Right ventricle myocardium inferior (tissue), 1 donor: ENCODE measurements at regions of chr5 and their contacts with region 1.

Region 1: DNA sequence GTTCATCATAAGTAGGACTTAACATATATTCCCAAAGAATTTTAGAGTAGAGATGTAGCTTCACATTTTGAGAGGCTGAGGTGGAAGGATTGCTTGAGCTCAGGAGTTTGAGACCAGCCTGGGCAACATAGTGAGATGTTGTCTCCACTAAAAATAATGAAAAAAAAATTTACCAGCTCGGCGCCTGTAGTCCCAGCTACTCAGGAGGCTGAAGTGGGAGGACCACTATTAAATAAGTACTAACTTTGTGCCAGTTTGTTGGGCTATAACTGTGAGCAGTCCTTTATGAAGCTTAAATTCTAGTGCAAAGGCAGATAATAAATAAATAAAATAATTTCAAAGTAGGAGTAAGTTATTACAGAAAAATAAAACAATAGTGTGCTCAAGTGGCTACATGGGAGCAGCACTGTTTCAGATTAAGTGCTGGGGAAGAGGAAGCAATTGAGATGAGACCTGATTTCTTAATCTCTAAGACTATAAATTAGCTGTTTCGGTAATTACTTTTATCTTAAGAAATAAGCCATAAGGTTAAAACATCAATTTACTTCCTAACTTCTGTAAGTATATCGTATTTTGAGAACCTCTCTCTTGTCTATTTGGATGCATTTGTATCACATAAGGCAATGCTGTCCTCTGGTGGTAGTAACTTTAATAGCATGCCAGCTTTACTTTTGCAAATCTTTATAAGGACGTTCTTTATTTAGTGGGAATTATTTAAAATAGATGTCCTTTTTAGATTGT is 98.9 kb downstream of the CSNK1G3 start:
- DNase-seq: no peak
- ATAC-seq: peak; percentile 59

Region 2: DNA sequence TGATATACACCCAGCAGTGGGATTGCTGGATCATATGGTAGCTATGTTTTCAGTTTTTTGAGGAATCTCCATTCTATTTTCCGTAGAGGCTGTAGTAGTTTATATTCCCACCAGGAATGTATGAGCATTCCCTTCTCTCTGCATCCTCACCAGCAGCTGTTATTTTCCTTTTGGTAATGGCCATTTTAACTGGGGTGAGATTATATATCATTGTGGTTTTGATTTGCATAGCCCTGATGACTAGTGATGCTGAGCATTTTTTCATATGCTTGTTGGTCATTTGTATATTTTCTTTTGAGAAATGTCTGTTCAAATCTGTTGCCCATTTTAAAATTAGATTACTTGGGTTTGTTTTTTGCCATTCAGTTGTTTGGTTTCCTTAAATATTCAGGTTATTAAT is 563.1 kb before region 1 on chr5:
- intact Hi-C with region 1: no loop called
- DNase-seq: no peak
- ATAC-seq: no peak

Region 3: GRCh38 chr5:123235781-123236180 is 375.1 kb before region 1 on chr5:
- intact Hi-C with region 1: no loop called
- DNase-seq: no peak
- ATAC-seq: no peak

Region 4: DNA sequence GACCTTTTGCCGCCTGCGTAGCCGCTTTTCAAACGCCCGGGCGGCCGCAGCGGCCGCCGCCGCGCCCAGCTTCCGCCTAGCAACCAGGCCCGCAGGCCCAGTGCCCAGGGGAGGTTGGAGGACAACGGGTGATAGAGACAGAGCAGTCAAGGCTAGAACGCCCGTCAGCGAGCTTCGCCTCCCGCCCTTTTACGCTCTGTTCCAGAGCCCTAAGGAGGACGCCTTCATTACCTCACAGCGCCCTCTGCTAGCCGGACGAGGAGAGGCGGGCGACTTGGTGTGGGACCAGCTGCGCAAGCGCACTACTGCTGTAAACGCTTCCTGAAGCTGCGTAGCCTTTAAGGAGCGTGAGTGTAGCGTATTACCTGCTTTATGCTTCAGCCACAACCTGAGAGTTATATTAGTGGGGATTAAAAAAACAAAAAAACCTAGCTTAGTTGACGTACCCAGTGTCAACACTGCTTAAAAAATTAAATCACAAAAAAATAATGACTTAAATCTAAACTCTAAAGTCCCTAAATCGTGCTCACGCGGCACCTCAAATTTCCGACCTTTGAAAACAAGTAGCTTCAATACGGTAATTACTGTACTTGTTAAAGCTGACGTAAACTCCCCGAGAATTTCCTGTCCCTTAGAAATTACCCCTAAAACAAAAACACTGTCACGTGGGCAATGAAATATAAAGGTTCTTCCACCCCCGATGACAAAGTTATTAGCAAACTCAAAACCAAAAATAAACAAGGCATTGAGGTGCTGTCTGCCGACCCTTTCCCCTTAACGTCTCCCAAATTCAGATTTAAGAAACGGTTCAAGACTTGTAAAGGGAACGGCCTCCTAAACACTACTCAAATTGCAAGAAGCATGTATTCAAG is 187.3 kb before region 1 on chr5 and contains the start of gene CEP120:
- intact Hi-C with region 1: loop called (anchors 2 kb)
- DNase-seq: peak; percentile 100
- ATAC-seq: peak; percentile 100
- total RNA-seq, gene CEP120: 12.0 TPM

Region 5: DNA sequence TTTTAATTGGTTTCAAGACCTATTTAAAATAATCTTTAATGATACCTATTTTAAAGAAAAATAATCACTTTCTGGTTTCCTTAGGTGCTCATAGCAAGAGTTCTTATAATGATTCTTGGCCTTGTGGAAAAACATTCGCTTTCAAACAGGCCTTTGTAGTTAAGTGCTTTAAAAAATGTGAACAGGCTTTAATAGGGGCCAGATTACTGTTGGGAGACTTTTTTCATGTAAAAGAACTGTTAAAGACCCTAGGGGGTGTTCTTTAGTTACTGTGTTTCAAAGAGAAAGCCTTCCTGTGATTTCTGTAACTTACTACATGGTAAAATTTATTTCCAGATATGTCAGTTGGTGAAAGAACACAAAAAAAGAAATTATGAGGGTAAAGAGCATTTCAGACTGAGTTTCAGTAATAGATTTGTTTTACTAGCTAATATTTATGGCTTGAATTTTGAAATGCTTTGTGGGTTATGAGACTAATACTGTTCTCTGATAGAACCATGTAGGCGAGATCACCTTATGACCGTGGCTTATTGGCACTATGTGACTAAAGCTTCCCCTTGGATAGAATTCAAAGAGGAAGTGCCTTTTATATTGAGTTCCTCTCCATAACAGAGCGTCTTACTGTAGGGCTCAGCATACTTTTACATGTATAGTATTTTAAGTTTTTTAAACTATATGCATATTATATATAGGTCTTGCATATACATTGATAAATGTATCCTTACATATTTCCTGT is 28.1 kb before region 1 on chr5:
- intact Hi-C with region 1: loop called (anchors 5 kb)
- DNase-seq: no peak
- ATAC-seq: no peak

Region 6: GRCh38 chr5:123671042-123671441 is 60.2 kb after region 1 on chr5:
- intact Hi-C with region 1: no loop called
- DNase-seq: no peak
- ATAC-seq: no peak